PC-9 (cell line): ENCODE measurements at regions of chr5 and their contacts with region 1.

Region 1: GRCh38 chr5:65925601-65926275 is 637 bp upstream of the ERBIN start:
- DNase-seq: peak; percentile 67 to 89
- H3K4me3 ChIP-seq: peak overlapping the region; percentile 99
- H3K27ac ChIP-seq: peak overlapping the region; percentile 97
- H3K4me1 ChIP-seq: peaks cover 31% of the 10 kb centered on the region
- H3K27me3 ChIP-seq: no peaks in the 10 kb centered on the region
- CTCF ChIP-seq: no peak; the same call in 1 of the 2 replicates

Region 2: GRCh38 chr5:65742565-65743231 is 183.0 kb before region 1 on chr5:
- CTCF ChIA-PET with region 1: no interaction called
- POLR2A ChIA-PET with region 1: no interaction called
- intact Hi-C with region 1: loop called (anchors 1 kb)
- DNase-seq: peak; percentile 12 to 62
- H3K4me3 ChIP-seq: no peak overlapping the region
- H3K27ac ChIP-seq: no peak overlapping the region; the same call in 1 of the 2 replicates
- H3K4me1 ChIP-seq: peaks cover 5% of the 10 kb centered on the region
- H3K27me3 ChIP-seq: no peaks in the 10 kb centered on the region
- CTCF ChIP-seq: peak; percentile 86

Region 3: GRCh38 chr5:65809817-65810531 is 115.8 kb before region 1 on chr5:
- CTCF ChIA-PET with region 1: interaction called, 4 read pairs
- POLR2A ChIA-PET with region 1: interaction called, 22 read pairs
- intact Hi-C with region 1: loop called (anchors 1 kb)
- DNase-seq: peak; percentile 89 to 99
- H3K4me3 ChIP-seq: peak overlapping the region; percentile 21
- H3K27ac ChIP-seq: peak overlapping the region; percentile 99
- H3K4me1 ChIP-seq: peaks cover 80% of the 10 kb centered on the region
- H3K27me3 ChIP-seq: no peaks in the 10 kb centered on the region
- CTCF ChIP-seq: no peak

Region 4: DNA sequence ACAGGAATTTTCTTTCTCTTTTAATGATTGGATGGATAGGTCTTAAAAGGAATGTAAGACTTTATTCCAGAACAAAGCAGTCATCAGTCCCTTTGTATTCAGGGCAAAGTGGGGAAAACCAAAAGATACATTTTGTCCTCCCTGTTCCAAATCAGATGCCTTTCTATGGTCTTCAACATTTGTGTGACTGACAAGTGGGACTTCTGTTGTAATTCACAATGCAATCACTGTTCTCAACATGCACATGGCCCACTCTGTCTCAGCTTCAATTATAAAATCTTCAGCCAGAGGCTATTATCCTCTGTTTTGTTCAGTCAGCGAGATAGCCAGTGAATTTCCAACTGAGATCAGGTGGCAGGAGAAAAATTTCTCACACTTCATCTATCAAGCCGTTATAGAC is 94.9 kb before region 1 on chr5:
- CTCF ChIA-PET with region 1: no interaction called
- POLR2A ChIA-PET with region 1: no interaction called
- intact Hi-C with region 1: no loop called
- DNase-seq: no peak
- H3K4me3 ChIP-seq: no peak overlapping the region
- H3K27ac ChIP-seq: no peak overlapping the region
- H3K4me1 ChIP-seq: no peaks in the 10 kb centered on the region
- H3K27me3 ChIP-seq: no peaks in the 10 kb centered on the region
- CTCF ChIP-seq: no peak

Region 5: GRCh38 chr5:65861830-65862241 is 63.9 kb before region 1 on chr5:
- CTCF ChIA-PET with region 1: no interaction called
- POLR2A ChIA-PET with region 1: interaction called, 19 read pairs
- intact Hi-C with region 1: loop called (anchors 1 kb)
- DNase-seq: peak; percentile 85 to 96
- H3K4me3 ChIP-seq: no peak overlapping the region
- H3K27ac ChIP-seq: peak overlapping the region; percentile 97
- H3K4me1 ChIP-seq: peaks cover 37% of the 10 kb centered on the region
- H3K27me3 ChIP-seq: no peaks in the 10 kb centered on the region
- CTCF ChIP-seq: no peak

Region 6: GRCh38 chr5:65893749-65894435 is 31.8 kb before region 1 on chr5:
- CTCF ChIA-PET with region 1: no interaction called
- POLR2A ChIA-PET with region 1: interaction called, 12 read pairs
- intact Hi-C with region 1: no loop called
- DNase-seq: peak in 1 of 2 experiments; percentile 48
- H3K4me3 ChIP-seq: no peak overlapping the region
- H3K27ac ChIP-seq: no peak overlapping the region
- H3K4me1 ChIP-seq: peaks cover 17% of the 10 kb centered on the region
- H3K27me3 ChIP-seq: no peaks in the 10 kb centered on the region
- CTCF ChIP-seq: no peak

Region 7: GRCh38 chr5:65938256-65938655 is 12.5 kb after region 1 on chr5:
- CTCF ChIA-PET with region 1: no interaction called
- POLR2A ChIA-PET with region 1: no interaction called
- intact Hi-C with region 1: no loop called
- DNase-seq: no peak
- H3K4me3 ChIP-seq: no peak overlapping the region
- H3K27ac ChIP-seq: no peak overlapping the region
- H3K4me1 ChIP-seq: no peaks in the 10 kb centered on the region
- H3K27me3 ChIP-seq: no peaks in the 10 kb centered on the region
- CTCF ChIP-seq: no peak

Region 8: DNA sequence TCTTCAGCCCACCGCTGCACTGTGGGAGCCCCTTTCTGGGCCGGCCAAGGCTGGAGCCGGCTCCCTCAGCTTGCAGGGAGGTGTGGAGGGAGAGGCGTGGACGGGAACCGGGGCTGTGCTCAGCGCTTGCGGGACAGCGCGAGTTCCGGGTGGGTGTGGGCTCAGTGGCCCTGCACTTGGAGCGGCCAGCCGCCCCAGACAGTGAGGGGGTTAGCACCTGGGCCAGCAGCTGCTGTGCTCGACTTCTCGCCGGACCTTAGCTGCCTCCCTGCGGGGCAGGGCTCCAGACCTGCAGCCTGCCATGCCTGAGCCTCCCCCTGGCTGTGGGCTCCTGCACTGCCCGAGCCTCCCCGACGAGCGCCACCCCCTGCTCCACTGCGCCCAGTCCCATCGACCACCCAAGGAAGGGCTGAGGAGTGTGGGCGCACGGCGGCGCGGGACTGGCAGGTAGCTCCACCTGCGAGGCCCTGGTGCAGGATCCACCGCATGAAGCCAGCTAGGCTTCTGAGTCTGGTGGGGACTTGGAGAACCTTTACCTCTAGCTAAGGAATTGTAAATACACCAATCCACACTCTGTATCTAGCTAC is 577.6 kb after region 1 on chr5:
- CTCF ChIA-PET with region 1: no interaction called
- POLR2A ChIA-PET with region 1: no interaction called
- intact Hi-C with region 1: no loop called
- DNase-seq: no peak
- H3K4me3 ChIP-seq: no peak overlapping the region
- H3K27ac ChIP-seq: no peak overlapping the region
- H3K4me1 ChIP-seq: no peaks in the 10 kb centered on the region
- H3K27me3 ChIP-seq: no peaks in the 10 kb centered on the region; the same call in 1 of the 2 replicates
- CTCF ChIP-seq: no peak